H1 (cell line): ENCODE measurements at regions of chr3 and their contacts with region 1.

Region 1: GRCh38 chr3:187164885-187165543 is 25.7 kb upstream of the RPL39L start:
- DNase-seq: peak in 1 of 2 experiments; percentile 56
- H3K4me3 ChIP-seq: peak overlapping the region in 1 of 4 experiments; percentile 6; a peak in 1 of 8 replicates
- H3K27ac ChIP-seq: no peak overlapping the region
- H3K4me1 ChIP-seq: peaks cover 3 to 13% (median 7%) of the 10 kb centered on the region in 4 experiments; a peak in 6 of 7 replicates
- H3K27me3 ChIP-seq: no peaks in the 10 kb centered on the region
- CTCF ChIP-seq: peak in 2 of 3 experiments; percentile 46 to 64; a peak in 2 of 4 replicates
- EP300 ChIP-seq: no peak
- POLR2A ChIP-seq: no peak
- RAD21 ChIP-seq: peak; percentile 46 to 49

Region 2: GRCh38 chr3:186732169-186732766 is 432.7 kb before region 1 on chr3:
- CTCF ChIA-PET with region 1: no interaction called
- POLR2A ChIA-PET with region 1: no interaction called
- DNase-seq: no peak
- H3K4me3 ChIP-seq: no peak overlapping the region
- H3K27ac ChIP-seq: no peak overlapping the region
- H3K4me1 ChIP-seq: no peaks in the 10 kb centered on the region
- H3K27me3 ChIP-seq: no peaks in the 10 kb centered on the region
- CTCF ChIP-seq: no peak
- EP300 ChIP-seq: no peak
- POLR2A ChIP-seq: no peak
- RAD21 ChIP-seq: no peak

Region 3: DNA sequence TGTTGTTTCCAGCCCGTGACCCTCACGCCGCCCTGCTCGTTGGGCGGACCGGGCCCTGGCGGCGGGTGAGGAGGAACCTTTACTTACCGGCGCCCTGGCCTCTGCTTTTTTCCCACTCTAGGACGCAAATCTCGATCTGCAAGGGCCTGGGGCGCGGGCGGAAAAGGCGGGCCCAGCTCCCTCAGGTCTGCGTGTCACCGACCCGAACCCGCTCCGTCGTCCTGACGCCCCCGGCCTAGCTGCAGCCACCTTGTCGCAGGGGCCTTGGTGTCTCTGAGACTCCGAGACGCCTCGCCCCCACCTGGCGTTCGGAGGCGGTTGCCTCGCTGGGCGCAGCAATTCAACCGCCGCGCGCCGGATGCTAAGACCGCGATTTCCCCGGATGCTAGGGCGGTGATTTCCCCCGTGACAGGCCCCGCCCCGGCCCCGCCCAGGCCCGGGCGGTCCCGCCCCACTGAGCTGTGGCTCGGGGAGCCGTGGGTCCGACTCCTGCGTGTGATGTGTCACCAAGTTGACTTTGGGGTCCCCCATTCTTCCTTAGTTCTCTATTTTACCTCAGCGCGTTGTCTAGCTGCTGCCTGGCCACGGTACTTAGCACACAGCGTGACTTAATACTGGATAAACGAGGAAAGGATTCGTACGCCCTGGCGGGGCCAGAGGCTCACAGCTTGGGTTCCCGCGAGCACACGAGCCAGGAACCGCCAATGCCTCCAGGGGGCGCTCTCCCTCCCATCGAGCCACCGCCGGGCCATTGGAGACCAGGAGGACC is 25.7 kb before region 1 on chr3 and contains the start of gene RPL39L:
- CTCF ChIA-PET with region 1: interaction called, 30 read pairs
- POLR2A ChIA-PET with region 1: interaction called, 6 read pairs
- DNase-seq: peak; percentile 75 to 95
- H3K4me3 ChIP-seq: peak within 1 kb of the TSS; percentile 49 to 72 (median 59)
- H3K27ac ChIP-seq: peak within 1 kb of the TSS; percentile 78
- H3K4me1 ChIP-seq: peaks cover 0 to 3% (median 0%) of the 10 kb centered on the region in 4 experiments; a peak in 2 of 7 replicates
- H3K27me3 ChIP-seq: no peaks in the 10 kb centered on the region
- CTCF ChIP-seq: peak; percentile 88 to 90 (median 90)
- EP300 ChIP-seq: peak in 1 of 2 experiments; percentile 50; a peak in 1 of 3 replicates
- POLR2A ChIP-seq: peak; percentile 78 to 93
- RAD21 ChIP-seq: peak; percentile 53 to 69; a peak in 3 of 4 replicates
- total RNA-seq, gene RPL39L: 67.7 and 77.0 TPM in 2 replicates

Region 4: GRCh38 chr3:187150599-187150998 is 14.4 kb before region 1 on chr3:
- CTCF ChIA-PET with region 1: interaction called, 56 read pairs
- POLR2A ChIA-PET with region 1: interaction called, 6 read pairs
- DNase-seq: peak in 1 of 2 experiments; percentile 77
- H3K4me3 ChIP-seq: no peak overlapping the region
- H3K27ac ChIP-seq: no peak overlapping the region
- H3K4me1 ChIP-seq: no peaks in the 10 kb centered on the region
- H3K27me3 ChIP-seq: no peaks in the 10 kb centered on the region
- CTCF ChIP-seq: peak; percentile 32 to 63 (median 47)
- EP300 ChIP-seq: no peak
- POLR2A ChIP-seq: no peak
- RAD21 ChIP-seq: peak; percentile 22 to 34; a peak in 3 of 4 replicates

Region 5: DNA sequence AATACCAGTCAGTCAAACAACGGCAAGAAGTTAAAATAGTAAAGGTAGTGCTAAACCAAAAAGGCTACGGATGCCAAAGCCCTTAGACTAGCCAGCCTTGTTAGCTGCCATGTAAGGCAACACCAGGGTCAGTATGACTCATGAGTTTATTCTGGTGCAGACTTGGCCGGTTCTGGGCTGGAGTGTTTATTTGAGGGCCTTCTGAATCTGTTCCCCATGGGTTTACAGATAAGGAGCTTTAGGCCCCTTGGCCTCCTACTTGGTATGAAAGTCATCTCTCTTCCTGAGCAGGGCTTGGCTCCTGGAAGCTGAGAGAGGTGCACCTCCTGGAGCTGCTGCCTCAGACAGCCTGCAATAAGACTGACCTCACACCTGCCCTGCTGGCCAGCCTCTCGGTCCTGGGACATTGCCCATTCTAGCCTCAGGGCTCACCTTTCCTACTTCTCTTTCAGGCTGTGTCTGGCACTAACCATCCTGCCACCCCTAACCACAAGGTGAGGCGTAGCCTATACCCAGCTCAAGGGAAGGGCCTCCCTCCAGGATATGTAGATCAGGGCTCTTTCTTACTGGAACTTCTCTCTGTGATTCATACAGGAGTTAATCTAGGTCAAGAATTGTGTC is 21.9 kb after region 1 on chr3:
- CTCF ChIA-PET with region 1: interaction called, 16 read pairs
- POLR2A ChIA-PET with region 1: interaction called, 8 read pairs
- DNase-seq: no peak
- H3K4me3 ChIP-seq: no peak overlapping the region; a peak in 1 of 8 replicates
- H3K27ac ChIP-seq: no peak overlapping the region
- H3K4me1 ChIP-seq: peaks cover 6 to 36% (median 28%) of the 10 kb centered on the region in 4 experiments
- H3K27me3 ChIP-seq: no peaks in the 10 kb centered on the region; a peak in 1 of 7 replicates
- CTCF ChIP-seq: no peak
- EP300 ChIP-seq: no peak
- POLR2A ChIP-seq: no peak
- RAD21 ChIP-seq: no peak

Region 6: DNA sequence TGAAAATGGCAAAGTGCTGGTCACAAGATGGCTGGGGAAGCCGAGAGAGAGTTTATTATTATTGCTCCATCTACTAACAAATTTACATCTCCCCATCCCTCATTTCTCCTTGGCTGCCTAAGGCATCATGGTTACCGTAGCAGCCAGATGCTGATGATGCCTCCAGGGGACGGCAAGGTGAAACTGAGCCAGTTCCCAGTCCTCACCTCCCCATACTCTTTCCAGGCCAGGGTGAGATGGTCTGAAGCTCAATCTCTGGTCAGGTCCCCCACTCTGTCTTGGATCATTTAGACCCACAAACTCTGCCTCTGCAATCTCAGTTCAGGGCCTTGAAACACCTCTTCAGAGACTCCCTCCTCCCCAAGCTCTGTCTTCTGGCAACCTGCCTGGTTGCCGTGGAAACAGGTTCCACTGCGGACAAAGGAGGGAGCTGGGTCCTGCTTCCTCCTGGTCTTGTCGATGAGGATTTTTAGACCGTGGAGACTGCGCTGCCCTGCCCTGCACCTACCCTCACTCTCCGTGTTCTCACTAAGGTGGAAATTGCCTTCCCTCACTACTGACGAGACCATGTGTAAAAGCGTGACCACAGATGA is 32.1 kb after region 1 on chr3 and contains the start of gene RTP1:
- CTCF ChIA-PET with region 1: interaction called, 13 read pairs
- POLR2A ChIA-PET with region 1: interaction called, 3 read pairs
- DNase-seq: no peak
- H3K4me3 ChIP-seq: no peak within 1 kb of the TSS
- H3K27ac ChIP-seq: no peak within 1 kb of the TSS
- H3K4me1 ChIP-seq: peaks cover 0 to 5% (median 1%) of the 10 kb centered on the region in 4 experiments; a peak in 2 of 7 replicates
- H3K27me3 ChIP-seq: no peaks in the 10 kb centered on the region
- CTCF ChIP-seq: no peak
- EP300 ChIP-seq: no peak
- POLR2A ChIP-seq: no peak
- RAD21 ChIP-seq: no peak
- total RNA-seq, gene RTP1: 3.0 and 3.2 TPM in 2 replicates